GM12878 (cell line): ENCODE measurements at regions of chr12 and their contacts with region 1.

Region 1: DNA sequence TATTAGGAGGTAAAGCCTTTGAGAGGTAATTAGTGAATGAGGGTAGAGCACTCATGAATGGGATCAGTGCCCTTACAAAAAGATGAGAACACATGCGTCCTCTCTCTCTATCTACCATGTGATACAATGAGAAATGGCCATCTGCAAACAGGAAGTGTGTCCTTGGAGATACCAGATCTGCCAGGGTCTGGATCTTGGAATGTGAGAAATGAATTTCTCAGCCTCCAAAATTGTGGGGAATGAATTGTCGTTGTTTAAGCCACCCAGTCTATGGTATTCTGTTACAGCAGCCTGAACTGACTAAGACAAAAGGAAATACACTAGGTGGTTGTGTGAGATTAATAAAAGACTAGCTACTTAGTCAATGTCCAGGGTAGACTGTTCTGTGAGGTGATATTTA is 366.6 kb downstream of the NELL2 start:
- DNase-seq: no peak
- ATAC-seq: no peak
- H3K4me3 ChIP-seq: no peak overlapping the region
- H3K27ac ChIP-seq: no peak overlapping the region
- H3K4me1 ChIP-seq: no peaks in the 10 kb centered on the region
- H3K27me3 ChIP-seq: no peaks in the 10 kb centered on the region
- CTCF ChIP-seq: no peak
- EP300 ChIP-seq: no peak
- POLR2A ChIP-seq: no peak
- RAD21 ChIP-seq: no peak

Region 2: DNA sequence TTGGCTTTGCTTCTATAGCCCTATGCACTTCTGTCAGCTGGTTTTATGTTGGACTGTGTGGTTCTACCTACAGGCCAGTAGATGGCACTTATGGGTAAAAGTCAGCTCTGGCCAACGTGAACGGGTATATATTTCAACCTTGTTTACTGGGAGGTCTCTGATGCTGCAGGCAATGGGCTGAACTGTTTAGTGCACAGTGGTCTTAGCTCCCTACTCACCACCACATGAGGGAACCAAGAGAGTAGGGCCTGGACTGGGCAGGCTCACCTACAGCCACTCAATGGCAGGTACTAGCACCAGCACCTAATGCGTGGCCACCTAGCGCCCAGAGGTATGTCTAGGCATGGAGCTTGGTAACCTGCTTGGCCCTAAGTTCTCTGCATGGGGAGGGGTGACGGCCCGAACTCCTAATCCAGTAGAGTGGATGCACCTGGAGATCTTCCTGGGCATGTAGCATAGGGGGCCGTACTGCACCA is 191.8 kb before region 1 on chr12:
- CTCF ChIA-PET with region 1: interaction called, 4 read pairs
- POLR2A ChIA-PET with region 1: no interaction called
- RAD21 ChIA-PET with region 1: no interaction called
- SMC1A ChIA-PET with region 1: interaction called, 13 read pairs
- in situ Hi-C with region 1: no loop called
- intact Hi-C with region 1: no loop called
- DNase-seq: no peak
- ATAC-seq: peak; percentile 93
- H3K4me3 ChIP-seq: no peak overlapping the region
- H3K27ac ChIP-seq: no peak overlapping the region
- H3K4me1 ChIP-seq: no peaks in the 10 kb centered on the region
- H3K27me3 ChIP-seq: no peaks in the 10 kb centered on the region
- CTCF ChIP-seq: peak; percentile 51 to 57 (median 55); a peak in 5 of 6 replicates
- EP300 ChIP-seq: no peak
- POLR2A ChIP-seq: no peak
- RAD21 ChIP-seq: peak; percentile 89

Region 3: DNA sequence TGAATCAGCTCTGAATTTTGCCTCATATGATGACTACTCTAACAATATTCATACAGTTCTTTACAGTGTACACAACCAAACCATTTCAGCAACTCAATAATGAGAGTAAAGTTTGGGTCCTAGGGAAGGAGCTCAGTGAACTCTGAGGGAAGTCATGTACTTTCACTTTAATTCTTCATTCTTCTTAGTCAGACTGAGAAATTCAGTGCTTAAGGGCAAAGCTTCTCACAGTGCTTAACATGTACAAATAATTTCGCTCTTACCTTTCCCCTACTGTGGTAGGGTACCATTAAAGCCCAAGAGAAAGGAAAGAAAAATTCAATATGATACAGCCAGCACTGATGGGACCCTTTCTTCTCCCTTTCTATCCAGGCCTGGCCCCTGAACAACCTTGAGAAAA is 68.3 kb before region 1 on chr12:
- CTCF ChIA-PET with region 1: interaction called, 9 read pairs
- POLR2A ChIA-PET with region 1: interaction called, 5 read pairs
- RAD21 ChIA-PET with region 1: interaction called, 21 read pairs
- SMC1A ChIA-PET with region 1: interaction called, 17 read pairs
- in situ Hi-C with region 1: no loop called
- intact Hi-C with region 1: no loop called
- DNase-seq: peak; percentile 60
- ATAC-seq: peak; percentile 74
- H3K4me3 ChIP-seq: no peak overlapping the region
- H3K27ac ChIP-seq: peak overlapping the region; percentile 50
- H3K4me1 ChIP-seq: peaks cover 10% of the 10 kb centered on the region
- H3K27me3 ChIP-seq: no peaks in the 10 kb centered on the region
- CTCF ChIP-seq: no peak
- EP300 ChIP-seq: peak in 1 of 2 experiments; percentile 50; a peak in 1 of 4 replicates
- POLR2A ChIP-seq: no peak
- RAD21 ChIP-seq: peak; percentile 14; the same call in 1 of the 2 replicates

Region 4: GRCh38 chr12:44446181-44446580 is 63.3 kb before region 1 on chr12:
- CTCF ChIA-PET with region 1: interaction called, 9 read pairs
- POLR2A ChIA-PET with region 1: interaction called, 5 read pairs
- RAD21 ChIA-PET with region 1: interaction called, 21 read pairs
- SMC1A ChIA-PET with region 1: interaction called, 17 read pairs
- in situ Hi-C with region 1: no loop called
- intact Hi-C with region 1: no loop called
- DNase-seq: no peak
- ATAC-seq: no peak
- H3K4me3 ChIP-seq: no peak overlapping the region
- H3K27ac ChIP-seq: no peak overlapping the region
- H3K4me1 ChIP-seq: peaks cover 4% of the 10 kb centered on the region; the same call in 1 of the 2 replicates
- H3K27me3 ChIP-seq: no peaks in the 10 kb centered on the region
- CTCF ChIP-seq: no peak
- EP300 ChIP-seq: no peak
- POLR2A ChIP-seq: no peak
- RAD21 ChIP-seq: no peak

Region 5: DNA sequence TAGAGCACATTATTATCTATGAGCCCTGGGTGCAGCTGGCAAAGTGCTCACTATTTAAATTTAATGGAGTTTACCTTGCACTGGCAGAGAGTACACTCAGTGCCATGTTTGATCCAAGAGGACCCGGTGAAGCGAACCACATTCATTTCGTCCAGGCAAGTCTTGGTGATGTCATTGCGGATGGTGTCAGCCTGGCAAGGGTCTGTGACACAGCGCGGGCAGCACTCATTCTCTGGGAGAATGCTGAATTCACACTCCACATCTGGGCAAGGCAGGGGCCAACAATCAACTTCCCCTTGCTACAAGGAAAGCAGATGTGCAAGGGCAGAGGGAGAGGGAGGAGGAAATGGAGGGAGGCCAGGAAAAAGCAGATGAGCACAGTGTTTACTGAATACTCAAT is 10.5 kb after region 1 on chr12:
- CTCF ChIA-PET with region 1: interaction called, 3 read pairs
- POLR2A ChIA-PET with region 1: no interaction called
- RAD21 ChIA-PET with region 1: interaction called, 3 read pairs
- SMC1A ChIA-PET with region 1: interaction called, 15 read pairs
- in situ Hi-C with region 1: no loop called
- intact Hi-C with region 1: no loop called
- DNase-seq: no peak
- ATAC-seq: no peak
- H3K4me3 ChIP-seq: no peak overlapping the region
- H3K27ac ChIP-seq: no peak overlapping the region
- H3K4me1 ChIP-seq: no peaks in the 10 kb centered on the region
- H3K27me3 ChIP-seq: no peaks in the 10 kb centered on the region
- CTCF ChIP-seq: no peak
- EP300 ChIP-seq: no peak
- POLR2A ChIP-seq: no peak
- RAD21 ChIP-seq: no peak